Activated naive CD4-positive, alpha-beta T cell treated with anti-CD3 and anti-CD28 coated beads for 36 hours (primary cell): ENCODE measurements at regions of chr7 and their contacts with region 1.

Region 1: DNA sequence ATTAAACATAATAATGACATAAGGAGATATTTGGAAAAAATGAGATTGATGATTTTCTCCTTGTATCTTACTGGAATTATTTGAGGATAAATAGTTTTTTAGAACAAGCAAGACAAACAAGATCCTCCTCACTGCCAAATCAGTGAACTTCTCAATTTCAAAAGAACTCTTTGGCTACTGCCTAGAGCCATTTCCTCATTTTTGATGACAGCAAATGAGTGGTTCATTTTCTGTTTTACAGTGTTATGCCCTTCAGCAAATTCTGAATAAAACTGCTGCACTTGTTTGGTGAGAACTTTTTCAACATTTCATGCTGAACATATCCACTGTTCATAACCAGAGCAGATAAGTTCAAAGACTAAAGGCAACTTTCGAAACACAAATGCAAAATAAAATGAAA is 42.5 kb upstream of the AHR start:
- DNase-seq: no peak
- H3K4me3 Mint-ChIP-seq: no peak overlapping the region
- H3K27ac Mint-ChIP-seq: no peak overlapping the region
- H3K4me1 Mint-ChIP-seq: peaks cover 6% of the 10 kb centered on the region
- H3K27me3 Mint-ChIP-seq: no peaks in the 10 kb centered on the region

Region 2: GRCh38 chr7:16795624-16796023 is 460.3 kb before region 1 on chr7:
- CTCF ChIA-PET with region 1: no interaction called
- intact Hi-C with region 1: no loop called
- DNase-seq: no peak
- H3K4me3 Mint-ChIP-seq: no peak overlapping the region
- H3K27ac Mint-ChIP-seq: no peak overlapping the region
- H3K4me1 Mint-ChIP-seq: no peaks in the 10 kb centered on the region
- H3K27me3 Mint-ChIP-seq: peaks cover 14% of the 10 kb centered on the region

Region 3: GRCh38 chr7:17126413-17127268 is 129.3 kb before region 1 on chr7:
- CTCF ChIA-PET with region 1: no interaction called
- intact Hi-C with region 1: loop called (anchors 1 kb)
- DNase-seq: no peak
- H3K4me3 Mint-ChIP-seq: no peak overlapping the region
- H3K27ac Mint-ChIP-seq: no peak overlapping the region
- H3K4me1 Mint-ChIP-seq: peaks cover 23% of the 10 kb centered on the region
- H3K27me3 Mint-ChIP-seq: no peaks in the 10 kb centered on the region

Region 4: GRCh38 chr7:17275749-17276671 is 20.1 kb after region 1 on chr7:
- CTCF ChIA-PET with region 1: interaction called, 4 read pairs
- intact Hi-C with region 1: loop called (anchors 1 kb)
- DNase-seq: no peak
- H3K4me3 Mint-ChIP-seq: no peak overlapping the region
- H3K27ac Mint-ChIP-seq: peak overlapping the region; percentile 25
- H3K4me1 Mint-ChIP-seq: peaks cover 19% of the 10 kb centered on the region
- H3K27me3 Mint-ChIP-seq: no peaks in the 10 kb centered on the region